ENCODE measurements at regions of chr12 and their contacts with region 1.

Region 1: DNA sequence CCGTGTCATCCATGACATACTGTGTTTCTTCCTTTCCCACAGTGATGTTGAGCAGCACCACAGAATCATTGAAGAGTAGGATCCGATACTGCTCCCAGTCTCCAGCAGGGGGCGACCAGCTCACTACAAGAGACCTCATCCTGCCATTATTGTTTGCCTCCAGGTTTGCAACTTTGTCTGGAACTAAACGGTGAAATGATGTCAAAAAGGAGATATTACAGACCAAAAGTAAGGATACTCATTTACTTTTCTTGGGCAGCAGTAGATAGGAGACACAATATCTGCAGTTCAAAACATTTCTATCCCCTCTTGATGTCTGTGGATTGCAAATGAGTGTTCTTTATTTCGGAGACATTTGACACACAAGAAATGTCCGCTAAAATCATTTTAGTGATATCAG is 47.2 kb downstream of the PTPRB start:
- DNase-seq: peak; percentile 75 to 87 (median 81)
- H3K4me3 ChIP-seq: no peak overlapping the region
- H3K27ac ChIP-seq: no peak overlapping the region
- H3K4me1 ChIP-seq: no peaks in the 10 kb centered on the region
- H3K27me3 ChIP-seq: no peaks in the 10 kb centered on the region

Region 2: GRCh38 chr12:70638639-70639360 is 48.7 kb after region 1 on chr12:
- CTCF ChIA-PET with region 1: no interaction called
- POLR2A ChIA-PET with region 1: no interaction called
- DNase-seq: peak in 1 of 3 donors; percentile 7
- H3K4me3 ChIP-seq: no peak overlapping the region
- H3K27ac ChIP-seq: no peak overlapping the region
- H3K4me1 ChIP-seq: peaks cover 0 to 4% (median 0%) of the 10 kb centered on the region in 4 experiments
- H3K27me3 ChIP-seq: no peaks in the 10 kb centered on the region

Region 3: DNA sequence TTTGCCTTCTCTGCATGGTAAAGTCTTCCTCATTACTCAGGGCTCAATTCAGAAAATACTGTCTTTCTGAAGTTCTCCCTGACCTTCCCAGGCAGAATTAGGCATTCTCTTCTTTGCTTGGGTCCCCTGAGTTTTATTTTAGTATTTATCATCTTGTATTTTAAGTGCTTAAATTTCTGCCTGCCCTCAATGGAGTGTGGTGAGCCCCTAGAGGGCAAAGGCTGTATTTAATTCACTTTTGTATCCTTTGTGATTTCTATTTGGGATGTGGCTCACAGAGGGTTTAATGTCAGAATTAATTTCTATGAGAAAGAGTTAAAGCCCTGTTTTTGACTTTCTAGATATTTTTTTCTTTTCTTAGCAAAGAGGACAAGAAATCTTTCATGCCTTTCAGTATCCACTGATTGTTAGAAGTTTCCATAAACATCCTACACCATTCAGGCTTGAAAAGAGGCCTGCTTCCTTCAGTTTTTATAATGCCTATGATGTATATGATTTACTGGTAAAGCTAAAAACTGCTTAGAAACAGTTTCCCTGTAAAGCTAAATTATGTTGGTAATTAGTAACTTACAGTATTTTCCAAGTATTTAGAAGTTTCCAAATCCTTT is 102.7 kb after region 1 on chr12:
- CTCF ChIA-PET with region 1: interaction called, 14 read pairs
- POLR2A ChIA-PET with region 1: no interaction called
- DNase-seq: peak; percentile 5 to 39 (median 37)
- H3K4me3 ChIP-seq: no peak overlapping the region
- H3K27ac ChIP-seq: no peak overlapping the region
- H3K4me1 ChIP-seq: no peaks in the 10 kb centered on the region
- H3K27me3 ChIP-seq: no peaks in the 10 kb centered on the region

Region 4: DNA sequence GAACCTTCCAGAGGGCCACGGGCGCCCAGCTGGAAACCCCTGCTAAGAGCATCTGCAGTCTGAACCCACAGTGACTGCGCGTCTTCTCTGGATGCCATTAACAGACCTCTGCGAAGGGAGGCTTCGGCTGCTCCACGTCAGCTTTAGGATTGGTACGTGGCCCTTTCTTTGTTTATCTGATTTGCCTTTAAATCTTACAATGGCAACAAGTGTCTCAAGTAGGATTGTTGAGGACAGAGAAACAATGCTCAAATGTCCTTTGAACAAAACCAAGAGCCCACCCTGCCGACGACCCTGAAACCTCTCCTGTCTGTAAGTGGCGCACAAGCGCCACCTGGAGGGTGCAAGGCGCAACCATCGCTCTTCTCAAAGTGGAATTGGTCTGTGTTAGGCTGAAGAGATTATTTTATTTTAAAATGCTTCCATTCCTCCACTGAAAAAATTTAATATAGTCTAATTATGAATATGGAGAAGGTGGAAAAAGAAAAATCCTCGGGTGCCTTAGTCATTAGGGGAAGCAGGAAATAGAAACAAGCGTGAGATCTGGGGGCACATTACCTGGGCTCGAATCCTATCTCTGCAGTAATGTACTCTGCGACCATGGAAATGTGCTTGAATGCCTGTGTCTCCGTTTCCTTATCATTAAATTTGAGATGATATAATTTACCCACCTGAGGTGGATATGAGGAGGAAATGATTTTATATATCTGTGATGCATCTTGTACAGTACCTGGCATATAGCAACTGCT is 129.8 kb after region 1 on chr12:
- CTCF ChIA-PET with region 1: interaction called, 13 read pairs
- POLR2A ChIA-PET with region 1: no interaction called
- DNase-seq: peak; percentile 64 to 88 (median 85)
- H3K4me3 ChIP-seq: peak overlapping the region in 6 of 7 experiments; percentile 45 to 83 (median 64)
- H3K27ac ChIP-seq: no peak overlapping the region
- H3K4me1 ChIP-seq: peaks cover 0 to 33% (median 17%) of the 10 kb centered on the region in 4 experiments
- H3K27me3 ChIP-seq: peaks cover 0 to 6% (median 0%) of the 10 kb centered on the region in 5 experiments

Region 5: DNA sequence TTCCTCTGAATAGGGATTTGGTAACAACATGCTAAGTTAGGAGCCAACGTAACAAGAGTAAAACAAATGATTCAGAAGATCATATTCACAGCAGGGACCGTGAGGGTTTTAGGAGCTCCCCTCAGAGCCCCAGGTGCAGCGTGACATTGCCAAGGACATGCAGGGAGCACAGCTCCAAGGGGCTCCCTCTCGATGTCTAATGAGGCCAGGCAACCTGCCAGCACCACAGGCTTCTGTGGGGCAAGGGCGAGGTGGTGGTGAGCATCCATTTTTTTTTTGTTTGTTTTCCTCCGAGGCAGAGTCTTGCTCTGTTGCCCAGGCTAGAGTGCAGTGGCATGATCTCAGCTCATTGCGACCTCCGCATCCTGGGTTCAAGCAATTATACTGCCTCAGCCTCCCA is 142.2 kb after region 1 on chr12:
- CTCF ChIA-PET with region 1: interaction called, 17 read pairs
- POLR2A ChIA-PET with region 1: no interaction called
- DNase-seq: no peak
- H3K4me3 ChIP-seq: no peak overlapping the region
- H3K27ac ChIP-seq: no peak overlapping the region
- H3K4me1 ChIP-seq: no peaks in the 10 kb centered on the region
- H3K27me3 ChIP-seq: no peaks in the 10 kb centered on the region

Measured in common myeloid progenitor, CD34-positive (primary cell).